Calu3 (cell line): ENCODE measurements at regions of chr16 and their contacts with region 1.

Region 1: GRCh38 chr16:75789237-75789636 is 62.9 kb upstream of the CPHXL start:
- DNase-seq: peak; percentile 38
- H3K4me3 Mint-ChIP-seq: no peak overlapping the region
- H3K27ac Mint-ChIP-seq: no peak overlapping the region
- H3K4me1 Mint-ChIP-seq: no peaks in the 10 kb centered on the region
- H3K27me3 Mint-ChIP-seq: peaks cover 29% of the 10 kb centered on the region
- CTCF ChIP-seq: peak; percentile 81

Region 2: DNA sequence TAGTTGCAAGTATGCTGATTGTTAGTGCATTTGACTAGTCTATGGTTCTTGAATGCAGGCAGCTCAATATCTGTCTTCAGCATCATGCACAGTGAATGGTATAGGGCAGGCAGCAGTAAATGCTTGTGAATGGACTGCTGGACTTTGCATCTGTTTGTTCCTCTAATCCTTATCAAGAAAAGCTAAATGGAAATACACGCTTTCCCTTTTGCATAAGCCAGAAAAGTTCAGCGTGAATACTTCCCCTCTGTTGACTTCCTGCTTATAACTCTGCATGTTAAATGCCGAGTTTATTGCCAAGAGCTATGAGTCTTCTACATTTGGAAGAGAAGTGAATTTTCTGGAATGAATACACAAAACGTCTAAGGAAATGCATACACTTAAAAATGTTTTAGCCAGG is 64.9 kb after region 1 on chr16:
- CTCF ChIA-PET with region 1: no interaction called
- intact Hi-C with region 1: no loop called
- DNase-seq: no peak
- H3K4me3 Mint-ChIP-seq: no peak overlapping the region
- H3K27ac Mint-ChIP-seq: no peak overlapping the region
- H3K4me1 Mint-ChIP-seq: no peaks in the 10 kb centered on the region
- H3K27me3 Mint-ChIP-seq: no peaks in the 10 kb centered on the region
- CTCF ChIP-seq: no peak

Region 3: DNA sequence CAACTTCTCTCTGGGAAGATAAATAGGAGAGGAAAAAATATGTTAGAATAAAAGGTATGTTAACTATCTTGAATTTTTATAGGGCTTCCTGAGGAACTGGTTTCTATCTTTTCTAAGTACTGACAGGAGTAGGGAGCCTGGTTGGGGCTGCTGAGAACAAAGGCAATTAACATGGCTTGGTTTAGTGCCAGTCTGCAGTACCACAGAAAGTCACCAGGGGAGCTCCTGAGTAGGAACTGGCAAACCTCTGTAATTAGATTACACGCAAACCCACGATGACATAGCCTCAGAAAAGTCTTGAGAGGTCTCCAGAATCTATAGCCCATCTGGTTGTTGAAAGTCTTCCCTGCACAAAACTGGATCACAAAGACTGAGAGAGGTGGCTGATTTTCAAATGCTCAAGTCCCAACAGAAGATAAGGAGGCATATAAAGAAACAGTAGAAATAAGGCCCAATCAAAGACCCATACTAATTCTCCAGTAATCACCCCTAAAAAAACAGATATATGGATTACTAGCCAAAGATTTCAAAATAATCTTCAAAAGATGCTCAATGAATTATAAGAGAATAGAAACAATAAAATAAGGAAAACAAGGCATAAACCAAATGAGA is 476.3 kb after region 1 on chr16:
- CTCF ChIA-PET with region 1: no interaction called
- intact Hi-C with region 1: loop called (anchors 10 kb)
- DNase-seq: peak; percentile 62
- H3K4me3 Mint-ChIP-seq: no peak overlapping the region
- H3K27ac Mint-ChIP-seq: no peak overlapping the region
- H3K4me1 Mint-ChIP-seq: no peaks in the 10 kb centered on the region
- H3K27me3 Mint-ChIP-seq: no peaks in the 10 kb centered on the region
- CTCF ChIP-seq: peak; percentile 44